Heart left ventricle (tissue), 16 donors: ENCODE measurements at regions of chr22 and their contacts with region 1.

Region 1: DNA sequence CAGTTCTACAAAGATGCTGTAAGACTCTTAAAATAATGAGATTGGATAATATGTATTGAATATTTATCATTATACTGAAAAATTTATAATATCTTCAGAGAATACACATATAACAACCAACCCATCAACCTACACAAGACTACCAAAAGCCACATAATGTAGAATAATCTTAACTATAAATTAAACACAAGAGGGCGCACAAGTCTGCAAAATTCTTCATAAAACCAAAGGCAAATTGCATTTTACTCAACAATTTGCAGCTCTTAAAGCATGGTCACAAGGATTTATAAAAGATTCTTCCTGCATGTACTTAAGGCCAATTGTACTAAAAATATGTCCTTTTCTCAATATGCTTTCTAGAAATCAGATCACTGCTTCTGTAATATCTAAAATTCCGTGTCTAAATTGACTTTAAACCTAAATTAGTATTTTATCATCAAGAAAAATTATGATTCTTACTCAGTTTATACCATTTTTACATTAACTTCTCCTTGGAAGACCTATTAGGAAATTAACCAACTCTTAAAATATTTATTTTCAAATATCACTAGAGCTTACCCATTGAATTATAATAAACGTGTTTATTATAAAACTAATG is 79.0 kb downstream of the TTC28 start:
- DNase-seq: no peak
- ATAC-seq: peak in 1 of 4 donors; percentile 39
- H3K4me3 ChIP-seq: no peak overlapping the region
- H3K27ac ChIP-seq: no peak overlapping the region
- H3K4me1 ChIP-seq: no peaks in the 10 kb centered on the region
- H3K27me3 ChIP-seq: no peaks in the 10 kb centered on the region
- CTCF ChIP-seq: peak; percentile 26 to 77 (median 54)
- POLR2A ChIP-seq: no peak

Region 2: GRCh38 chr22:28703436-28703835 is 102.8 kb after region 1 on chr22:
- intact Hi-C with region 1: no loop called
- DNase-seq: no peak
- ATAC-seq: no peak
- H3K4me3 ChIP-seq: no peak overlapping the region
- H3K27ac ChIP-seq: no peak overlapping the region
- H3K4me1 ChIP-seq: no peaks in the 10 kb centered on the region
- H3K27me3 ChIP-seq: no peaks in the 10 kb centered on the region
- CTCF ChIP-seq: no peak
- POLR2A ChIP-seq: no peak

Region 3: GRCh38 chr22:29040385-29041275 is 440.0 kb after region 1 on chr22:
- intact Hi-C with region 1: loop called in 8 of 10 experiments (anchors 2 to 10 kb)
- DNase-seq: peak in 4 of 5 donors; percentile 39 to 61 (median 52)
- ATAC-seq: peak in 3 of 4 donors; percentile 69 to 84 (median 76)
- H3K4me3 ChIP-seq: no peak overlapping the region
- H3K27ac ChIP-seq: no peak overlapping the region
- H3K4me1 ChIP-seq: peaks cover 0 to 10% (median 0%) of the 10 kb centered on the region in 12 donors
- H3K27me3 ChIP-seq: no peaks in the 10 kb centered on the region
- CTCF ChIP-seq: peak; percentile 93 to 99 (median 96)
- POLR2A ChIP-seq: no peak